K562 (cell line): ENCODE measurements at regions of chr2 and their contacts with region 1.

Region 1: GRCh38 chr2:199488772-199489400 is 31.1 kb upstream of the SATB2 start:
- DNase-seq: peak; percentile 65 to 76 (median 68)
- ATAC-seq: peak; percentile 74
- H3K4me3 ChIP-seq: no peak overlapping the region
- H3K27ac ChIP-seq: no peak overlapping the region
- H3K4me1 ChIP-seq: no peaks in the 10 kb centered on the region
- H3K27me3 ChIP-seq: no peaks in the 10 kb centered on the region
- CTCF ChIP-seq: peak; percentile 60 to 77 (median 72)
- EP300 ChIP-seq: no peak
- POLR2A ChIP-seq: no peak
- RAD21 ChIP-seq: peak; percentile 49 to 63

Region 2: GRCh38 chr2:198309673-198310280 is 1179.1 kb before region 1 on chr2:
- CTCF ChIA-PET with region 1: interaction called, 15 read pairs
- POLR2A ChIA-PET with region 1: no interaction called
- in situ Hi-C with region 1: loop called (anchors 25 kb)
- intact Hi-C with region 1: loop called (anchors 2 kb)
- DNase-seq: peak; percentile 54 to 61 (median 57)
- ATAC-seq: peak; percentile 63; the same call in 1 of the 3 replicates
- H3K4me3 ChIP-seq: no peak overlapping the region
- H3K27ac ChIP-seq: no peak overlapping the region
- H3K4me1 ChIP-seq: no peaks in the 10 kb centered on the region
- H3K27me3 ChIP-seq: peaks cover 0 to 8% of the 10 kb centered on the region in 2 experiments; a peak in 1 of 5 replicates
- CTCF ChIP-seq: peak; percentile 57 to 77 (median 59)
- EP300 ChIP-seq: no peak
- POLR2A ChIP-seq: no peak
- RAD21 ChIP-seq: peak; percentile 30 to 53; a peak in 3 of 4 replicates

Region 3: DNA sequence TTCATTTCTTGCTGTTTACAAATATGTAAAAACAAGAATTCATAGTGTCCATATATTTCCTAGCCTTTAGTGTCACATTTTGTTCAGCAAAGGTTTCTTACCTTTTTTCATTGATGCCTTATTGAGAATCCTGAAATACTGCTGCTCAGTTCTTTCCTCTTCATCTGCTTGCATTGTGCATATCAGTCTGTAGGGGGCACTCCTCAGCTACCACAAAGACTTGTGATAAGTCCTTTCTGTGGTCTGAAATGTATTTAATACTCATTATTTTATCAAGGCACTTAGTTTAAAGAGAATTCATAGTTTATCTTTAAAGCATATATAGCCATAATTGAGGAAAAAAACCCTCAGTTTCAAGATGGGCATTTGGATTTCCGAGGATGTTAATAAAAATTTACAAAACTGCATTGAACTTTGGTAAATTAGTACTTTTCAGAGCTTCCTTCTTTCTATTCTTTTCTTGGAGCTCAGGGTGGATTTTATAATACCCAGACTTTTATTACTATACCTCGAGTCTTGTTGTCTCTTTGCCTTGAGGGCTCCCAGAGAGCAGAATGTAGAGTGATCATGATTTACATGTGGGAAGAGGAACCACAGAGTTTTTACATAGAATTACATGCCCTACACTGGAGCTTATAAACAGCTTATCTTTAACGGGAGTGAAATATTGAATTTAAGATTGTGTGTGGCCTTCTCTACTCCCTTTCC is 1114.4 kb before region 1 on chr2:
- CTCF ChIA-PET with region 1: no interaction called
- POLR2A ChIA-PET with region 1: no interaction called
- in situ Hi-C with region 1: no loop called
- intact Hi-C with region 1: loop called (anchors 2 kb)
- DNase-seq: peak; percentile 33 to 64 (median 42)
- ATAC-seq: peak; percentile 68
- H3K4me3 ChIP-seq: no peak overlapping the region
- H3K27ac ChIP-seq: no peak overlapping the region
- H3K4me1 ChIP-seq: peaks cover 0 to 3% of the 10 kb centered on the region in 2 experiments; a peak in 2 of 5 replicates
- H3K27me3 ChIP-seq: no peaks in the 10 kb centered on the region
- CTCF ChIP-seq: peak; percentile 45 to 71 (median 56); a peak in 5 of 6 replicates
- EP300 ChIP-seq: no peak
- POLR2A ChIP-seq: no peak
- RAD21 ChIP-seq: peak; percentile 55 to 62

Region 4: DNA sequence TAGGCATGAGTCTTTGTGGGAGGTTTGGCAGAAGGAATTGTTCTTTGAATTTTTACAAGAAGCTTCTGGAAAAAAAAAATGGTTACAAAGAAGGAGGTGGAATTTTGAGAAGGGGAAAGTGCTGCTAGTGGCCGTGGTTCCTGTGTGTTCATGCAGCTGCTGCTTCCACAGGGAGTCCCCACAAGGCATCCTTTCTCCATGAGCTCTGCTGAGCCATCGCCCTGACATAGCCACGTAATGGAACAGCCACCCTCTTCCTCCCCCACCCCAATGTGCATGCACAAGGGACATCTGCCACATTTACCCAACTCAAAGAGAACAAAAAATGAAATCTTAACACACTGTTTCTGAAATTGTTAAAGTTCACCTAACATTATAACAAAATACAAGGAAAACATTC is 560.9 kb before region 1 on chr2:
- CTCF ChIA-PET with region 1: no interaction called
- POLR2A ChIA-PET with region 1: no interaction called
- in situ Hi-C with region 1: no loop called
- intact Hi-C with region 1: no loop called
- DNase-seq: no peak
- ATAC-seq: no peak
- H3K4me3 ChIP-seq: no peak overlapping the region
- H3K27ac ChIP-seq: no peak overlapping the region
- H3K4me1 ChIP-seq: no peaks in the 10 kb centered on the region
- H3K27me3 ChIP-seq: no peaks in the 10 kb centered on the region
- CTCF ChIP-seq: no peak
- EP300 ChIP-seq: no peak
- POLR2A ChIP-seq: no peak
- RAD21 ChIP-seq: no peak

Region 5: DNA sequence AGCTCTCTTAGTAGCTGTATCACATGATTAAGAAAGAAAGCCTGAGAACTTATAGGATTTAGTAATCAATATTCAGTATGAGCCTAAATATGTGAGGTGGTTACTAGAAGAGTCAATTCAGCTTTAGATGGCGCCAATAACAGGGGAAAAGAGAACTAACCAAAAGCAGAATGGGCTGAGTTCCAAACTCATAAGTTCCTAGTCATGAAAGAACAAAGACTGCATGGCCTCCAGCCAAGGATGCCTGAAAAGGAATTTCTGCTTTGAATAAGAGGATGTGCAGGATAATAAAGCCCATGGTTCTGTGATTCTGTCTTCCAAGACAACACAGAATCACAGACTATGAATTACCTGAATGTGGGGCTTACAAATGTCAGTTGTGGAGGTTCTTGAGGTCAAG is 227.6 kb before region 1 on chr2:
- CTCF ChIA-PET with region 1: no interaction called
- POLR2A ChIA-PET with region 1: interaction called, 3 read pairs
- in situ Hi-C with region 1: no loop called
- intact Hi-C with region 1: loop called (anchors 10 kb)
- DNase-seq: no peak
- ATAC-seq: no peak
- H3K4me3 ChIP-seq: no peak overlapping the region
- H3K27ac ChIP-seq: no peak overlapping the region
- H3K4me1 ChIP-seq: no peaks in the 10 kb centered on the region
- H3K27me3 ChIP-seq: no peaks in the 10 kb centered on the region
- CTCF ChIP-seq: no peak
- EP300 ChIP-seq: no peak
- POLR2A ChIP-seq: no peak
- RAD21 ChIP-seq: no peak

Region 6: GRCh38 chr2:199339891-199340605 is 148.8 kb before region 1 on chr2:
- CTCF ChIA-PET with region 1: no interaction called
- POLR2A ChIA-PET with region 1: no interaction called
- in situ Hi-C with region 1: no loop called
- intact Hi-C with region 1: loop called (anchors 10 kb)
- DNase-seq: no peak
- ATAC-seq: no peak
- H3K4me3 ChIP-seq: no peak overlapping the region
- H3K27ac ChIP-seq: no peak overlapping the region
- H3K4me1 ChIP-seq: no peaks in the 10 kb centered on the region; a peak in 3 of 5 replicates
- H3K27me3 ChIP-seq: no peaks in the 10 kb centered on the region
- CTCF ChIP-seq: no peak
- EP300 ChIP-seq: no peak
- POLR2A ChIP-seq: no peak
- RAD21 ChIP-seq: no peak

Region 7: GRCh38 chr2:199535445-199536177 is 46.7 kb after region 1 on chr2:
- CTCF ChIA-PET with region 1: no interaction called
- POLR2A ChIA-PET with region 1: no interaction called
- in situ Hi-C with region 1: no loop called
- intact Hi-C with region 1: no loop called
- DNase-seq: no peak
- ATAC-seq: no peak
- H3K4me3 ChIP-seq: no peak overlapping the region
- H3K27ac ChIP-seq: no peak overlapping the region
- H3K4me1 ChIP-seq: no peaks in the 10 kb centered on the region
- H3K27me3 ChIP-seq: no peaks in the 10 kb centered on the region
- CTCF ChIP-seq: no peak
- EP300 ChIP-seq: no peak
- POLR2A ChIP-seq: no peak
- RAD21 ChIP-seq: no peak

Region 8: GRCh38 chr2:199552141-199552540 is 63.3 kb after region 1 on chr2:
- CTCF ChIA-PET with region 1: no interaction called
- POLR2A ChIA-PET with region 1: no interaction called
- in situ Hi-C with region 1: no loop called
- intact Hi-C with region 1: no loop called
- DNase-seq: no peak
- ATAC-seq: no peak
- H3K4me3 ChIP-seq: no peak overlapping the region
- H3K27ac ChIP-seq: no peak overlapping the region
- H3K4me1 ChIP-seq: no peaks in the 10 kb centered on the region; a peak in 1 of 5 replicates
- H3K27me3 ChIP-seq: peaks cover 0 to 19% of the 10 kb centered on the region in 2 experiments; a peak in 3 of 5 replicates
- CTCF ChIP-seq: no peak
- EP300 ChIP-seq: no peak
- POLR2A ChIP-seq: no peak
- RAD21 ChIP-seq: no peak

Region 9: DNA sequence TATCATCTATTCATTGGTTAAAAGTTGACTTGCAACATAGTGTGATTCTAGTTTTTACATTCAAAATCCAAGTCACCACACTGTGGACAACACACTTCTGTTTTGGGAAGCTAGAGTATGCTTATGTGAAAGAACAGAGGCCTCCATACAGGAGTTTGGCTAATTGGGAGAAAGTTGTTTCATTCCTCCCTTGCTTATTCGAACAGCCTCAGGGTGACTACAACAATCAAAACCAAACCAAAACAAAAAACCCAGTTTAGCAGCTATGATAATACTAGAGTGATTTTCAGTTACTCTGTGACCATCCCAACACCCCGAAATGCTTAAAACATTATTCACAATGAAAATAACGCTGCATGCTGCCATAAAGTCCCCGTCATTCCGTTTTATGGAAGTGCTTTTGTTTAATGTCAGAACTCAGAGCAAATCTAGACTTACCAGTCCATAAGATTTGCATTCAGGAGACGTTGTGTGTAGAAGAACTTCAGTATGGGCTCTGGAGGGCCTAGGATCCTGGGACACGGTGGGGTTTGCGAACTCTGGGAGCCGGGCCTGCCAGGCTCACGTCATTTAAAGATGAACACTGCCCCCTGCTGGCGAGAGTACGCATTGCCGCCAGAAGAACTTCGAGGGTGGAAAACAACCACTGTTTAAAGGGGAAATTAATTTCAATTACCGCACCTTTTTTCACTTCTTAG is 250.7 kb after region 1 on chr2:
- CTCF ChIA-PET with region 1: interaction called, 4 read pairs
- POLR2A ChIA-PET with region 1: no interaction called
- in situ Hi-C with region 1: no loop called
- intact Hi-C with region 1: loop called (anchors 5 kb)
- DNase-seq: peak; percentile 47 to 59 (median 58)
- ATAC-seq: peak; percentile 81
- H3K4me3 ChIP-seq: no peak overlapping the region
- H3K27ac ChIP-seq: no peak overlapping the region
- H3K4me1 ChIP-seq: no peaks in the 10 kb centered on the region
- H3K27me3 ChIP-seq: peaks cover 5 to 8% of the 10 kb centered on the region in 2 experiments; a peak in 3 of 5 replicates
- CTCF ChIP-seq: peak; percentile 56 to 77 (median 73)
- EP300 ChIP-seq: no peak
- POLR2A ChIP-seq: no peak
- RAD21 ChIP-seq: peak; percentile 67 to 71

Region 10: GRCh38 chr2:199784512-199784911 is 295.6 kb after region 1 on chr2:
- CTCF ChIA-PET with region 1: no interaction called
- POLR2A ChIA-PET with region 1: no interaction called
- in situ Hi-C with region 1: no loop called
- intact Hi-C with region 1: no loop called
- DNase-seq: no peak
- ATAC-seq: no peak
- H3K4me3 ChIP-seq: no peak overlapping the region
- H3K27ac ChIP-seq: no peak overlapping the region
- H3K4me1 ChIP-seq: no peaks in the 10 kb centered on the region
- H3K27me3 ChIP-seq: no peaks in the 10 kb centered on the region
- CTCF ChIP-seq: no peak
- EP300 ChIP-seq: no peak
- POLR2A ChIP-seq: no peak
- RAD21 ChIP-seq: no peak